Activated B cell treated with CpG ODN at 0.5 μM for 24 hours (primary cell): ENCODE measurements at regions of chr11 and their contacts with region 1.

Region 1: DNA sequence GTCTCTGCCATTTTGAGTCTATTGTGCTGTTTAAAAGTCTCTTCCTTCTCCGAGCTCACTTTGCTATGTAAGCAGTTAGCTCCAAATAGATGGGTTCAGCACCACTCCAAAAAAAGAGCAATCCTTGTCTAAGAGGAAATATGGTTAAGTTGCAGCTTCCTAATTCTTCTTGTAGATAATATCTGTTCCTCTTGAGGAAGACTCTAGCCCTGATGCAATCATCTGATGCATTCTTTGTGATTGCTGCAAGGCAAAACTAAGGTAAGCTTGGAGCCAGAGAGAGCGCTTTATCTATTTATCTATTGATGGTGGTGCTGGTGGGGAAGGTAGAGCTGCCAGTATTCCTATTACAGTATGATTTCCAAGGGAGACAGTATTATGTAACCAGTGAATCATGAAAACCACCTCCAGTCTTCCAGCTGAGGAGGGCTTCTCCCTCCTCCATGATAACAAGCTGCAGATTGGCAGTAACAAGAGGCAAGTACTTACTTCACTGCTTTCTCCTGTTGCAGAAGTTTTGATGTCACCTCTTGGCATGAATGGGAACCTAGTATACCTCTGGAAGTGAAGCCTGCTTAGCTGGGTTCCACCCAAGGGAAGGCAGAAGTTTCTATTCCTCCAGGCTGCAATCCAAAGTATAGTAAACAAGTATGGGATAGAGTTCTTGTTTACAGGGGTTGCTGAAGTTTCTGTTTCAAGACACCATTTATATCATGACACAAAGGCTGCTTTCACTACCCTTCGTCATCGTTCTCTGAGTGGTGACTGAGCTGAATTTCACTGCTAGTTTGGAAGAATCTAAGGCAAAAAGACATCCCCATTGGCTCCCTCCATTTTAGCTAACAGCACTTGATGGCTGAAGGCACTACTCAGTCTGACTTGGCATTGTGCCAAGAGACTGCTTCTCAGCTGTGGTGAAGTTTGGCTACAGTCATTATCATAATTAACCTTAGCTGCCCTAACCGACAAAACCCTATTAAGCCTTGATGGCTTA is 49.7 kb downstream of the FDX1 start:
- DNase-seq: no peak
- ATAC-seq: no peak
- H3K4me3 Mint-ChIP-seq: no peak overlapping the region
- H3K27ac Mint-ChIP-seq: no peak overlapping the region
- H3K4me1 Mint-ChIP-seq: no peaks in the 10 kb centered on the region
- H3K27me3 Mint-ChIP-seq: peaks cover 3% of the 10 kb centered on the region
- CTCF ChIP-seq: no peak

Region 2: DNA sequence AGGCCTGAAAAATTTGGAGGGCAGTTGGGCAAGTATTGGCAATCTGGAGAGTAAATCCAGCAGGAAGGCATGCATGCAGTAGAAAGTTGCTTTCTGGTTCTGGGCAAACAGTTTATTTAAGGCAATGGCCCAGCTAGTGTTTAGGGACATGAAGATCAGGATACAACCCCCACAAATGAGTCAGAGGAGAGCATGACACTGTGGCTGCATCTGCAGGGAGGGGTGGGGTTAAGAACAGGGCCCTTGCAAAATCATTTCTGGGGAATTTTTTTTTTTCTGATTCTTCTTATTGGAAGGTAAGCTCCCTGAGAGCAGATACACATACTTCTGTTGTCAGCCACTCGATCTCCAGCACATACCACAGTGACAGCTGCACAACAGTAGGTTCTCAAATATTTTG is 11.5 kb after region 1 on chr11:
- CTCF ChIA-PET with region 1: no interaction called
- POLR2A ChIA-PET with region 1: interaction called, 22 read pairs
- intact Hi-C with region 1: no loop called
- DNase-seq: no peak
- ATAC-seq: no peak
- H3K4me3 Mint-ChIP-seq: no peak overlapping the region
- H3K27ac Mint-ChIP-seq: no peak overlapping the region
- H3K4me1 Mint-ChIP-seq: no peaks in the 10 kb centered on the region
- H3K27me3 Mint-ChIP-seq: peaks cover 4% of the 10 kb centered on the region
- CTCF ChIP-seq: no peak